Testis (tissue), 5 donors: ENCODE measurements at regions of chr10 and their contacts with region 1.

Region 1: DNA sequence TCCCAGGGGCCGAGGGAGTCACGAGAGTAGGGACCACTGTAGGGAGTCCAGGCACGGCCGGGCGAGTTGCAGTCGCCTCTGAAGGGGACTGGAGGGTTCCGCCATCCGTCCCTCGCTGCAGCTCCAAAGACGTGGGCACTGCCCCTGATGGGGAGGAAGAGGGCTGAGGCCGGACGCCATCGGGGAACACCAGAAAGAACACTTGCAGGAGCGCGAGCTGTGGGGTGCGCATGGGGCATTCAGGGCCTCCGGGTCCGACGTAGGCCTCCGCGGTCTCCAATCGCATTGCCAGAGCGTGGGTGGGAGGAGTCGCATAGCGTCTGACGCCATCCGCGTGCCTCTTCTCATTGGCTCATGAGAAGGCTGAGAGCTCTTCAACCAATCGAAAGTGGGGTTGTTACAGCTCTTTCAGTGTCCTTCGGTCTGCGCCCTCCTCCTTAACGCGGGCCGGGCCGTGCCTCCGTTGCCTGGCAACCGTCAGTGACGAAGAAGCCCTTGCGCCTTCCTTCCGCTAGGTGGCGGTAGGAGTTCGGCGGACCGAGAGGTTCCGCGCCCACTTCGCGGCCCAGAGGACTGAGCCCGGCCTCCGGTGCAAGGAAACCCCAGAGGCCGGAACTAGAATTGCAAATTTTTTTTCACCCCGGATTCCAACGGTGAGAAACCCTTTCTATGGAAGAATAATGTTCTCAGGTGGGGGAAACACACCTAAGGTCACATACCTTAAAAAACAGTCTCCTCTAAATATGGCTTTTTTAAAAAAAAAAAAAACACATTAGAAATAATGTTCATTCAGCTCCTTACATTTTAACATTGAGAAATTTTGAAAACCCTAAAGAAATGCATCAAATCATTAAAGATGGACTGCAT is at the start of gene TCTN3:
- DNase-seq: peak; percentile 99
- H3K4me3 ChIP-seq: peak within 1 kb of the TSS; percentile 70 to 79
- H3K27ac ChIP-seq: peak within 1 kb of the TSS; percentile 16 to 81
- H3K4me1 ChIP-seq: no peaks in the 10 kb centered on the region
- H3K27me3 ChIP-seq: no peaks in the 10 kb centered on the region
- CTCF ChIP-seq: peak; percentile 99 to 100 (median 100)
- POLR2A ChIP-seq: no peak
- total RNA-seq, gene TCTN3: 29.3 to 29.7 TPM

Region 2: DNA sequence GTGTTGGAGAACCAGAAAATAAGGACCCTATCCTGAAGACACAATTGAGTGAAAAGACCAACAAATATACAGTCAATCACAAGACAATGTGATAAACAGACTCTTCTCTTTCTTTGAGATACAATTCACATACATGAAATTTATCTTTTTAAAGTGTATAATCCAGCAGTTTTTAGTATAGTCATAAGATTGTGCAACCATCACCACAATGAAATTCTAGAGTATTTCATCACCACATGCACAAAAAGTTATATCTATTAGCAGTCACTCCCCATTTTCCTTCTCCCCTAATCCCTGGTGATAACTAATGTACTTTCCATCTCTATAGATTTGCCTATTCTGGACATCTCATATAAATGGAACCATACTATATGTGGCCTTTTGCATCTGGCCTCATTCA is 124.5 kb before region 1 on chr10:
- intact Hi-C with region 1: no loop called
- DNase-seq: no peak
- H3K4me3 ChIP-seq: no peak overlapping the region
- H3K27ac ChIP-seq: no peak overlapping the region
- H3K4me1 ChIP-seq: no peaks in the 10 kb centered on the region
- H3K27me3 ChIP-seq: no peaks in the 10 kb centered on the region
- CTCF ChIP-seq: no peak
- POLR2A ChIP-seq: no peak

Region 3: GRCh38 chr10:95864906-95865813 is 171.3 kb after region 1 on chr10:
- intact Hi-C with region 1: loop called (anchors 10 kb)
- DNase-seq: no peak
- H3K4me3 ChIP-seq: no peak overlapping the region
- H3K27ac ChIP-seq: no peak overlapping the region
- H3K4me1 ChIP-seq: no peaks in the 10 kb centered on the region
- H3K27me3 ChIP-seq: no peaks in the 10 kb centered on the region
- CTCF ChIP-seq: peak; percentile 13 to 51 (median 34)
- POLR2A ChIP-seq: no peak